Activated CD8-positive, alpha-beta memory T cell treated with anti-CD3 and anti-CD28 coated beads, Interleukin-2, amount 10 ng/mL, durations not matched to agents 7 days and 5 days (primary cell): ENCODE measurements at regions of chr4 and their contacts with region 1.

Region 1: DNA sequence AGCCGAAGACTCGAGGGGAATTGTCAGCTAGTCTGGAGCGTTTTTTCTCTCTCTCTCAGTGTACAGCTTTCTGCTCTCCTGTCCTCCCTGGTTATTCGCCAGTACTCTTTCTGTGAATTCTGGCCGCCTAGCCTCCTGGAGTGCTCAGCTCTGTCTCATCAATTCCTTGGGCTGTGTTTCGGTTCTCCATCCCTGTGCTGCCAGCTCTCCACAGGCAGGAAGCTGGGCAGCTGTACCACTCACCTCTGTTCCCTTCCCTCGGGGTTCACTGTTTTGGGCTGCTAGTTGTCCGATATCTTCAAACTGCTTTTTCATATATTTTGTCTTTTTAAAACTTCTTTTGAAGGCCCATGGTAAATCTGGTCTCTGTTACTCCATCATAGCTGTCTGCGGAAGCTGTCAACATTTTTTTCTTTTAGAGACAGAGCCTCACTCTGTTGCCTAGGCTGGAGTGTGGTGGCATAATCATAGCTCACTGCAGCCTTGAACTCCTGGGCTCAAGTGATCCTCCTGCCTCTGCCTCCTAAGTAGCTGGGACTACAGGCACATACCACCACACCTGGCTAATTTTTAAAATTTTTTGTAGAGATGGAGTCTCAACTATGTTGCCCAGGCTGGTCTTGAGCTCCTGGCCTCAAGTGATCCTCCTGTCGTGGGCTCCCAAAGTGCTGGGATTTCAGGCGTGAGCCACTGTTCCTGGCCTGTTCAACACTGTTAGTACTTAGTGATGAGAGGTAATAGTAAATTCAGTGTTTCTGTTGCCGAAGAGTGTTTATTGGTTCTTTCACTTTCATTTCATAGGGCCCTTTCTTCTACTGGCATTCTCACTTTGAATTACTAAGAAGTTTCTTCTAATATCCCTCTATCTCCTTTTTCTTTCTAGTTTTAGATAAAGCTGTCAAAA is 18.6 kb downstream of the ZCCHC4 start:
- DNase-seq: no peak
- ATAC-seq: peak; percentile 93
- H3K4me3 Mint-ChIP-seq: peak overlapping the region; percentile 79
- H3K27ac Mint-ChIP-seq: peak overlapping the region; percentile 98
- H3K4me1 Mint-ChIP-seq: peaks cover 19% of the 10 kb centered on the region
- H3K27me3 Mint-ChIP-seq: no peaks in the 10 kb centered on the region

Region 2: GRCh38 chr4:25320773-25321172 is 10.4 kb before region 1 on chr4:
- CTCF ChIA-PET with region 1: interaction called, 13 read pairs
- DNase-seq: no peak
- ATAC-seq: peak; percentile 86
- H3K4me3 Mint-ChIP-seq: peak overlapping the region; percentile 62
- H3K27ac Mint-ChIP-seq: peak overlapping the region; percentile 88
- H3K4me1 Mint-ChIP-seq: peaks cover 41% of the 10 kb centered on the region
- H3K27me3 Mint-ChIP-seq: no peaks in the 10 kb centered on the region

Region 3: GRCh38 chr4:25367004-25367621 is 36.0 kb after region 1 on chr4:
- CTCF ChIA-PET with region 1: interaction called, 16 read pairs
- DNase-seq: no peak
- ATAC-seq: no peak
- H3K4me3 Mint-ChIP-seq: no peak overlapping the region
- H3K27ac Mint-ChIP-seq: no peak overlapping the region
- H3K4me1 Mint-ChIP-seq: no peaks in the 10 kb centered on the region
- H3K27me3 Mint-ChIP-seq: no peaks in the 10 kb centered on the region